ENCODE measurements at regions of chr3 and their contacts with region 1.

Region 1: DNA sequence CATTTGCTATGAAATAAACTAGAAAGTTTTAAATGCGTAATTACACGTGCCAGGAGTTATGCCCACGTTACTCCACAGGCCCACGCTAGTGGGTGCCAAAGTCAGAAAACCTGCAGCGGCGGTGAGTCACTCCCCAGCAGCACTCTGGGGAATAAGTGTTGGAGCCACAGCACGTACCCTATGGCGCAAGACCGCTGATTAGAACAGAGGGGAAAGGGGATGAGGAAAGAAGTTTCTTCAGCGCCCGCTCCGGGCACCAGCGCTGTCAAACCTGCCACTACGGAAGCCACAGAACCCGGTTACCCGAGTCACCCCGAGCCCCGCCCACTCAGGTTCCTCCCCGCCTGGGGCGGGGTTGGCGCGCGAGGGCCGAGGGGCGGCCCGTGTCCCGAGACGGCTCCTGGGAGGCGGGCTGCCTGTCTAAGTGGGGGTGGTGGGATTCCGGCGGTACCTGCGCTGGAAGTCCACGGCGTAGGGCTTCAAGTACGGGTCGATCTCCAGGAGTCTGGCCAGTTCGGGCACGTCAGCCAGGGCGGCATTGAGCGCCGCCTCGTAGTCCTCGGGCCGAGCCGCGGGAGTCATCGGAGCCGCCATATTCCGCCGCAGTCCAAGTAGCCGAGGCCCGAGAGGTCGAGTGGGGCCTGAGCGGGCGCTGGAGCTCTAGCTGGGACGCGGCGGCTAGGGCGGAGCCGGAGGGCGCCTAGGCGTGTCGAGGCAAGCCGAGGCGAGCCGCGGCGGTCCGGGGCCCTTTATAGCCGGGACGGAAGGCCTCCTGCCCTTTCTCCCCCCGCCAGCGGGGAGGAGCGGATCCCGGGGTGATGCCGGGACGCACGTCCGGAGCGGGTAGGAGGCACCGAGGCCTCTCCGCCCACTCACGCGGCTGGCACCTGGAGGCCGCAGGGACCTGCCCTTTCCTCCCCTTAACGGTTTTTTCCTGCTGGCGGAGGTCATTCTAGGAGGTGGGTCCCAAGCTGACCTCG is at the start of gene GBE1:
- DNase-seq: peak; percentile 96
- ATAC-seq: peak; percentile 87
- H3K4me3 ChIP-seq: peak within 1 kb of the TSS; percentile 69
- H3K27ac ChIP-seq: peak within 1 kb of the TSS; percentile 96
- H3K4me1 ChIP-seq: peaks cover 27% of the 10 kb centered on the region
- H3K27me3 ChIP-seq: no peaks in the 10 kb centered on the region
- CTCF ChIP-seq: peak; percentile 59
- total RNA-seq, gene GBE1: 56.6 and 57.7 TPM in 2 replicates

Region 2: DNA sequence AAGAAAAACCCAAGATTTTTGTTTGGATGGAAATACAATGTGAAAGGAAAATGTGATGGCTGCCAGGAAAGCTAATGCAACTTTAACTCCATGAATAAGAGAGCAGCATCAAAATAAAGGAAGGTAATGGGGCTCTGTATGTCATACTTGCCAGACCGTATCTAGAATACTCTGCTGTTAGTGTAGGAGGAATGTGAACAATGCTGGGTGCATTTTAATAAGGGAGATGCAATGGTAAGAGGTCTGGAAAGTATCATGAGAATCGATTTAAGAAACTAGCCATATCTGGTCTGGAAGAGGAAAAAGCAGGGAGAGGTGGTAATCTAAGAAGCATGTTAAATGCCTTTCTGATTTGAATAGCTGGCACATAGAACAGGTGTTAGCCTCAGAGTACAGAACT is 239.4 kb before region 1 on chr3:
- CTCF ChIA-PET with region 1: no interaction called
- POLR2A ChIA-PET with region 1: no interaction called
- intact Hi-C with region 1: no loop called
- DNase-seq: no peak
- ATAC-seq: no peak
- H3K4me3 ChIP-seq: no peak overlapping the region
- H3K27ac ChIP-seq: no peak overlapping the region
- H3K4me1 ChIP-seq: no peaks in the 10 kb centered on the region
- H3K27me3 ChIP-seq: no peaks in the 10 kb centered on the region
- CTCF ChIP-seq: no peak

Region 3: GRCh38 chr3:81837071-81837593 is 75.9 kb after region 1 on chr3:
- CTCF ChIA-PET with region 1: no interaction called
- POLR2A ChIA-PET with region 1: no interaction called
- intact Hi-C with region 1: loop called (anchors 1 kb)
- DNase-seq: peak; percentile 62
- ATAC-seq: peak; percentile 96
- H3K4me3 ChIP-seq: peak overlapping the region; percentile 41
- H3K27ac ChIP-seq: peak overlapping the region; percentile 66
- H3K4me1 ChIP-seq: peaks cover 16% of the 10 kb centered on the region
- H3K27me3 ChIP-seq: no peaks in the 10 kb centered on the region
- CTCF ChIP-seq: no peak

Region 4: DNA sequence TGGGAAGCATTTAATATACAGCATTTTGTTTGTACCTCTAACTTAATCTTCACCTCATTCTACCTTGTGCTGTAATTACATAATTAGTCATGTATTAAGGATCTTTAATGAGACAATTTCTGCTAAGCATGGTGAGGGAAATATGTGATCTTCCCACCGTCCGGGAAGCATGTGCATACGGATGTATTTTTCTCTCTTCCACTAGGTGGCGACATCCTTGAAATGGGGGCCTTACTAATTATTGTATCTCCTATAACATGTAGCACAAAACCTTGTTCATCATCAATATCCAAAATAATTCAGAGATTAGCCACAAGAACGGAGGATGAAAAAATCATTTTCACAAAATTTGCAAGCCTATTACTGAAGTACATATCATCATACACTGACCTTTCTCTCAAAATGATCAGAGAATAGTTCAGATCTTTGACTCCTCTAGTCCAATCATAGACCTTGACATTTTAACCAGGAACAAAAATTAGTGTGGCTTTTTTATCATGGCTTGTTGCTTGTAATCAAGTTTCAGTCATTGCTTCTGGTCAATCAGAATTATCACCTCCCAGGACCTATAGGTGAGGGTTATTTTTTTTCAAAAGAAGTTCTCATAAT is 149.1 kb after region 1 on chr3:
- CTCF ChIA-PET with region 1: no interaction called
- POLR2A ChIA-PET with region 1: no interaction called
- intact Hi-C with region 1: loop called (anchors 5 kb)
- DNase-seq: peak; percentile 69
- ATAC-seq: peak; percentile 74
- H3K4me3 ChIP-seq: no peak overlapping the region
- H3K27ac ChIP-seq: no peak overlapping the region
- H3K4me1 ChIP-seq: peaks cover 7% of the 10 kb centered on the region; the same call in 1 of the 2 replicates
- H3K27me3 ChIP-seq: no peaks in the 10 kb centered on the region
- CTCF ChIP-seq: peak; percentile 89

Measured in PC-3 (cell line).